Ascending aorta (tissue), 2 donors: ENCODE measurements at regions of chr6 and their contacts with region 1.

Region 1: DNA sequence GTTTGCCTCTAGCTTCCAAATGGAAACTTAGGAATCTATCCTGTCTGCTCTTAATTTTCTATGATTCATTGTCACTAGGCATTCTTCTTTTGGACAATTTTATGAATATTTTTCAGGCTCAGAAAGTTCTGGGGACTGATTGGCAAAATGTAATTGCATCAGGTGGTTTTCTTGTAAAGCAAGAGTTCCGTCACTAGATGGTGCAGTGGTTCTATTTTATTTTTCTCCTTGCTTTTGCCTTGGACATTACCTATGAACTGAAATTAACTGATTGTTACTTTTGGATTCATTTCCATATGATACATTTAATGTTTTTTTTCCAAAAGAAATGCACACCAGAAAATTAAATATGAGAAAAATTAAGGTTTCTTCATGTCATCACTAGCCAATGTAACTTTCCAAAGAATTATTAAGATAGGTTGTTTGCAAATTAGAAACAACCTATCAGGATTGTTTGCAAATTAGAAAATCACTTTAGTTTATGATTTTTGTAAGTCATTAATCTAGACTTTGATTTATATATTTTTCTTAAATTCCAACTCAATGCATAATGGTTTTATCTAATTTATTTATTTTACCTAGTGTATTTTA is 48.0 kb downstream of the TMEM170B start:
- DNase-seq: no peak
- H3K4me3 ChIP-seq: no peak overlapping the region
- H3K27ac ChIP-seq: no peak overlapping the region
- H3K4me1 ChIP-seq: peaks cover 0 to 21% of the 10 kb centered on the region in 2 donors
- H3K27me3 ChIP-seq: no peaks in the 10 kb centered on the region
- CTCF ChIP-seq: peak; percentile 52 to 68 (median 58)

Region 2: DNA sequence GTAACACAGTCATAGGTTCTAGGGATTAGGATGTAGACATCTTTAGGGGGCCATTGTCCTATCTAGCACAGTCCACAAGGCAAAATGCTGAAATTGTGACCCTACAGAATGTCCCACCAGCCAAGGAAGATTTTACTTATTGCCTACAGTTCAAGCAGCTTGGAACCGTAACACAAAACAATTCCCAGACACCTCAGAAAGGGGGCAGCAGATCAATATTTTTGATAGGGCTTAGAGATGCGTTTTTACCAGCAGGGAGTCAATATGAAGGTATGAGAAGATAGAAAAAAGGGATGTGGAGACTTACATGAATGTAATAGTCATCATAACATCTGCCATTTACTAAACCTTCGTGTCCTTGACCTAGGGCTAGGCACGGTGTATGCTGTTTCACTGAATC is 33.0 kb after region 1 on chr6:
- intact Hi-C with region 1: no loop called
- DNase-seq: no peak
- H3K4me3 ChIP-seq: no peak overlapping the region
- H3K27ac ChIP-seq: no peak overlapping the region
- H3K4me1 ChIP-seq: peaks cover 0 to 31% of the 10 kb centered on the region in 2 donors
- H3K27me3 ChIP-seq: no peaks in the 10 kb centered on the region
- CTCF ChIP-seq: no peak

Region 3: GRCh38 chr6:12890171-12890790 is 1304.8 kb after region 1 on chr6:
- intact Hi-C with region 1: loop called (anchors 10 kb)
- DNase-seq: no peak
- H3K4me3 ChIP-seq: no peak overlapping the region
- H3K27ac ChIP-seq: no peak overlapping the region
- H3K4me1 ChIP-seq: no peaks in the 10 kb centered on the region
- H3K27me3 ChIP-seq: no peaks in the 10 kb centered on the region
- CTCF ChIP-seq: peak in 1 of 3 experiments; percentile 27